ENCODE measurements at regions of chr6 and their contacts with region 1.

Region 1: GRCh38 chr6:138509371-138509770 is 10.1 kb upstream of the NHSL1 start:
- DNase-seq: no peak
- H3K4me3 ChIP-seq: no peak overlapping the region
- H3K27ac ChIP-seq: no peak overlapping the region
- H3K27me3 ChIP-seq: no peaks in the 10 kb centered on the region
- CTCF ChIP-seq: peak; percentile 42

Region 2: DNA sequence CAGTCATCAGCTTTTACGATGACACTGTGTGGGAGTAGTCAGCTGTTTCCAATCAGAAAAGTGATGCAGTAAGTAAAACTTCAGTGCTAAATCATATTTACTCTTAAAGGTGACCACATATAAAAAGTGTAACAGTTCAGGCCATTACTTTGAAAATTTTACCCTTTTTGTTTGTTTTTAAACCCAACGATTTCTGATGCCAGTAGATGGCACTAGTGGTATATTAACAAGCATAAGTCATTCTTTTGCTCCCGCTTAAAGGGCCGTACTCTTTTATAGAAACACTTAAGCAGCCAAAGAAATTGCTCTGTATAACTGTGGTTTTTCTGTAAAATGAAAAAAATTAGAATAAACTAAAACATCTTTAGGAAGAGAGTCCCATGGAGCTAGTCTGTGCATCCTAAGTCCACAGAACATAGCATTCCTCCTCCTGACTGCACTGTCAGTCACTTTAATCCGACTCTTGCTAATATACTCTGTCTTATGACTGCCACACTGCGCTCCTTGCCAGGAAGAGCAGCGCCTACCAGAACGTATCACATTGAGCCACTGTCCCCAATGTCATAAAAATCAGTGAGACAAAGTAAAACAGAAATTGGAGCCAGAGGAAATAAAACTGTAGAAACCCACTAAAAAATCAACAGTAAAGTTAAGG is 80.3 kb before region 1 on chr6:
- CTCF ChIA-PET with region 1: interaction called, 24 read pairs
- POLR2A ChIA-PET with region 1: no interaction called
- DNase-seq: peak; percentile 41
- H3K4me3 ChIP-seq: no peak overlapping the region
- H3K27ac ChIP-seq: no peak overlapping the region
- H3K27me3 ChIP-seq: no peaks in the 10 kb centered on the region
- CTCF ChIP-seq: peak; percentile 62

Region 3: GRCh38 chr6:138434925-138435324 is 74.4 kb before region 1 on chr6:
- CTCF ChIA-PET with region 1: interaction called, 24 read pairs
- POLR2A ChIA-PET with region 1: no interaction called
- DNase-seq: no peak
- H3K4me3 ChIP-seq: no peak overlapping the region
- H3K27ac ChIP-seq: no peak overlapping the region
- H3K27me3 ChIP-seq: no peaks in the 10 kb centered on the region
- CTCF ChIP-seq: no peak

Measured in AG04450 (cell line).